ENCODE measurements at regions of chr3 and their contacts with region 1.

Region 1: GRCh38 chr3:88137836-88138235 is 11.9 kb upstream of the C3orf38 start:
- DNase-seq: no peak
- ATAC-seq: no peak
- H3K4me3 ChIP-seq: no peak overlapping the region
- H3K27ac ChIP-seq: no peak overlapping the region
- H3K4me1 ChIP-seq: no peaks in the 10 kb centered on the region; a peak in 1 of 5 replicates
- H3K27me3 ChIP-seq: no peaks in the 10 kb centered on the region
- CTCF ChIP-seq: no peak
- EP300 ChIP-seq: no peak
- POLR2A ChIP-seq: no peak
- RAD21 ChIP-seq: no peak

Region 2: GRCh38 chr3:87805670-87806069 is 332.2 kb before region 1 on chr3:
- CTCF ChIA-PET with region 1: no interaction called
- POLR2A ChIA-PET with region 1: no interaction called
- in situ Hi-C with region 1: loop called (anchors 10 kb)
- intact Hi-C with region 1: no loop called
- DNase-seq: no peak
- ATAC-seq: peak; percentile 32
- H3K4me3 ChIP-seq: no peak overlapping the region
- H3K27ac ChIP-seq: peak overlapping the region; percentile 80
- H3K4me1 ChIP-seq: peaks cover 4 to 9% of the 10 kb centered on the region in 2 experiments; a peak in 3 of 5 replicates
- H3K27me3 ChIP-seq: no peaks in the 10 kb centered on the region
- CTCF ChIP-seq: no peak
- EP300 ChIP-seq: no peak
- POLR2A ChIP-seq: no peak
- RAD21 ChIP-seq: no peak

Measured in K562 (cell line).